A549 (cell line): ENCODE measurements at regions of chr5 and their contacts with region 1.

Region 1: GRCh38 chr5:170225326-170226128 is 7.3 kb upstream of the C5orf58 start:
- DNase-seq: peak; percentile 66 to 68
- ATAC-seq: peak; percentile 82 to 96; a peak in 4 of 6 replicates
- H3K4me3 ChIP-seq: no peak overlapping the region
- H3K27ac ChIP-seq: no peak overlapping the region
- H3K4me1 ChIP-seq: peaks cover 1% of the 10 kb centered on the region
- CTCF ChIP-seq: peak; percentile 85
- EP300 ChIP-seq: no peak
- POLR2A ChIP-seq: no peak
- RAD21 ChIP-seq: peak; percentile 86 to 90

Region 2: DNA sequence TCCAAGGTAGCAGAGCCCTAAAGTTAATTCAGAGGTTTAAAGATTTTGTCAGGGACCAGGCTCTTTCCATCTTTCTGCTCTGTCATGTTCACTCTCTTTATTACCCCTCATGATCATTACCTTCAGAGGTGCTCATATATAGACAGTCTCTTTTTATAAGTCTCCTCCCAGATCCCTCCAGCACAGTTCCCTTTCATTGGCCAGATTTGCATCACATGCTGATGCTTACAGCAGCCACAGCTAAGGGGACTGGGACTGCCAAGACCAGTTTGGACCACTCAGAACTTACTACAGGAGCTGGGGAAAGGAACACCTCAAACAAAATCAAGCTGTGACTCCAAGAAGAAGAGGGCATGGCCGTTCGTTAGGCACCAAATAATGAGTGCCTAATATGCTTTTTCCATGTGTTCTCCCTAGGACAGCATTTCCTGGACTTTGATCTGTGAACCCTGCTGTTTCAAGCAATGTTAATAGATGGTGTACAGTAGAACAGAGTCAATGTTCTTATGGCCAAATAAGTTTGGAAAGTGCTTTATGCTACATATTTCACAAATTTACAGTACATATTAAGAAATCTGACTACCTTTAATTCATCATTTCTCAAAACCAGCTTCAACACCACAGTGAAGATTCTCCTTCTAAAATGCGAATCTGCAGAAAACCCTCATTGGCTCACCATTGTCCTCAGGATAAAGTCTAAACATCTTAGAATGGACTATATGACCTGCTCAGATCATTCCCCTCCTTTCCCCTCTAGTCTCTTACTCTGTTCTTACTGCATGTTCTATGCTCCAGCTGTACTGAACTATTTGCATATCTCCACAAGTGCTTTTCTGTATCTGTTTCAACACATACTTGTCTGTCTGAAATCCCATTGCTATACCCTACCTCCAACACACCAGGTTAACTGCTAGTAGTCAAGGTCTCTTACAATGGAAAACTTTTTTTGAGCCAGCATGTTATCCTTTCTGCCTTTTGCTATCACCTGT is 10.6 kb after region 1 on chr5:
- CTCF ChIA-PET with region 1: interaction called, 46 read pairs
- POLR2A ChIA-PET with region 1: no interaction called
- DNase-seq: no peak
- ATAC-seq: no peak
- H3K4me3 ChIP-seq: no peak overlapping the region
- H3K27ac ChIP-seq: no peak overlapping the region
- H3K4me1 ChIP-seq: no peaks in the 10 kb centered on the region
- CTCF ChIP-seq: no peak
- EP300 ChIP-seq: no peak
- POLR2A ChIP-seq: no peak
- RAD21 ChIP-seq: no peak

Region 3: DNA sequence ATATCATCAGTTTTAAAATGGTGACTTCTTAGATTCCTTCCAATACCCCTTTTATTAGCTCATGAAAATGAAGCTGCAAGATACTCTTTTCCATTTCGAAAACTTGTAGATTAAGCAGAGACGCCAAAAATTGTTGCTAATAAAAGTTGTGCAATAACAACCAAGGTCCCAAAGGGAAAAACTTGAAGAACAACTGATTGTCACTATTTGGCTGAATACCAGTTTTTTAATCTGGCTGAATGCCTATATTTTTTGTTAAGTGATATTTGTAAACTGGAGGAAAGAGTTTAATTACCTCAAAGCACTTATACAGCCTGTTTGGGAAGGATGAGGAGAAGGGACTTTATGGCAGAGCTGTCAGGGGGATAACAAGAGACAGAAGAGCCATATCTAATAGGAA is 21.8 kb after region 1 on chr5:
- CTCF ChIA-PET with region 1: interaction called, 12 read pairs
- POLR2A ChIA-PET with region 1: no interaction called
- DNase-seq: no peak
- ATAC-seq: no peak
- H3K4me3 ChIP-seq: no peak overlapping the region
- H3K27ac ChIP-seq: no peak overlapping the region
- H3K4me1 ChIP-seq: no peaks in the 10 kb centered on the region
- CTCF ChIP-seq: no peak
- EP300 ChIP-seq: no peak
- POLR2A ChIP-seq: no peak
- RAD21 ChIP-seq: no peak

Region 4: DNA sequence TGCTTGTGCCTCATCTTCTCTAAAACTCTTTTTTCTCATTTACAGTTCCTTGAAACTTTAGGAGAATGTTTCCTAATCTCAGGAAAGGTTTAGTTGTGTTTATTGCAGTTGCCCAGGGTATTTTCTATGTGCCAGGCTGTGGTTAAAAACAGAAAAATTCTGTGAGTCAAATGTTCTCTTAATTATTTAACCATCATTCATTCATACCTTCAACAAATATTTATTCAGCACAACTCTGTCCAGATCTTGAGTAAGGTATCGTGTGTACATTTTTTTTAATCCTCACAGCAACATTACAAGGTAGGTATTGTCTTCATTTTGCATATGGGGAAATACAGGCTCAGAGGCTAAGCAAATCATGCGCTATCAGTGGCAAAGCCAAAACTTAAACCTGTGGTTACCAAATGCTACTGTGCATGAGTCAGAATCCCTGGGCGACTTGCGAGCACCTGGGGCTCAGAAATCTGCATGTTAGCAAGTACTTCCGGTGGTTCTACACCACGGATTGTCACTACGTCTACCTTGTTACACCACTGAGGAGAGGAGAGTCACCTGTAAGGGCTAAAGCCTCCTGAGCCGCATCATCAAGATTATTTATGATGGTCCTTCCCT is 28.4 kb after region 1 on chr5:
- CTCF ChIA-PET with region 1: interaction called, 12 read pairs
- POLR2A ChIA-PET with region 1: no interaction called
- DNase-seq: no peak
- ATAC-seq: no peak
- H3K4me3 ChIP-seq: no peak overlapping the region
- H3K27ac ChIP-seq: no peak overlapping the region
- H3K4me1 ChIP-seq: no peaks in the 10 kb centered on the region
- CTCF ChIP-seq: no peak
- EP300 ChIP-seq: no peak
- POLR2A ChIP-seq: no peak
- RAD21 ChIP-seq: no peak

Region 5: GRCh38 chr5:170267431-170268152 is 42.1 kb after region 1 on chr5:
- CTCF ChIA-PET with region 1: interaction called, 29 read pairs
- POLR2A ChIA-PET with region 1: no interaction called
- DNase-seq: peak; percentile 76 to 79
- ATAC-seq: peak; percentile 94 to 98
- H3K4me3 ChIP-seq: no peak overlapping the region
- H3K27ac ChIP-seq: no peak overlapping the region
- H3K4me1 ChIP-seq: no peaks in the 10 kb centered on the region
- CTCF ChIP-seq: peak; percentile 85
- EP300 ChIP-seq: no peak
- POLR2A ChIP-seq: no peak
- RAD21 ChIP-seq: peak; percentile 61 to 69; a peak in 4 of 5 replicates

Region 6: GRCh38 chr5:170420780-170421412 is 195.4 kb after region 1 on chr5:
- CTCF ChIA-PET with region 1: interaction called, 270 read pairs
- POLR2A ChIA-PET with region 1: no interaction called
- DNase-seq: peak; percentile 71 to 79
- ATAC-seq: peak; percentile 71 to 92; a peak in 5 of 6 replicates
- H3K4me3 ChIP-seq: no peak overlapping the region
- H3K27ac ChIP-seq: no peak overlapping the region
- H3K4me1 ChIP-seq: peaks cover 7% of the 10 kb centered on the region; the same call in 2 of the 3 replicates
- CTCF ChIP-seq: peak; percentile 82
- EP300 ChIP-seq: no peak
- POLR2A ChIP-seq: no peak
- RAD21 ChIP-seq: peak; percentile 73 to 74